Transverse colon (tissue), 4 donors: ENCODE measurements at regions of chr10 and their contacts with region 1.

Region 1: GRCh38 chr10:119028900-119029612 is 458 bp upstream of the NANOS1 start:
- DNase-seq: peak; percentile 89
- H3K4me3 ChIP-seq: peak overlapping the region; percentile 19 to 74 (median 62)
- H3K27ac ChIP-seq: peak overlapping the region; percentile 70 to 84 (median 76)
- H3K4me1 ChIP-seq: peaks cover 5 to 30% (median 21%) of the 10 kb centered on the region in 4 donors
- H3K27me3 ChIP-seq: no peaks in the 10 kb centered on the region
- CTCF ChIP-seq: peak in 1 of 5 experiments; percentile 24
- EP300 ChIP-seq: no peak
- POLR2A ChIP-seq: no peak

Region 2: DNA sequence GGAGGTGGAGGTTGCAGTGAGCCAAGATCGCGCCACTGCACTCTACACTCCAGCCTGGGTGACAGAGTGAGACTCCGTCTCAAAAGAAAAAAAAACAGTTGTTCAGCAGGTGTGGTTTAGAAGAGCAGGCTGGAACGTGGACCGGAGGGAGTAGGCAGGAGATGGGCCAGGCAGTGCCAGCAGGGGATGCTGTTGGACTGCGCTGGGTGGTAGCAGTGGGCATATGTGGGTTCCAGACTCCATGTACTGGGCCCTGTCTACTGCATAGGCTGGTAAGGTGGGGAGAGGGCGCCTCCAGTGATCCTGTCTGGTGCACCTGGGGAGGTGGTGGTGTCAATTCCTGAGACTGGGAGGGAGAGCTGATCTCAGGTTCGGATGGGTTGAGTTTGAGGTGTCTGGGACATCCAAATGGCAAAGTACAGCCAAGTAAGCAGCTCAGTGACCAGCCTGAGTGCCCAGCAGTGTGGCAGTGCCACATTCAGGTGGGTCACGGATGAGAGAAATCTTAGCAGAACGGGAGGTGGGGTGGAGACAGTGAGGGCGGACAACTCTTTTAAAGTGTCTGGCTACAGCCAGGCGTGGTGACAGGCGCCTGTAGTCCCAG is 110.5 kb after region 1 on chr10:
- in situ Hi-C with region 1: loop called in 1 of 4 experiments (anchors 25 kb)
- intact Hi-C with region 1: no loop called
- DNase-seq: no peak
- H3K4me3 ChIP-seq: no peak overlapping the region
- H3K27ac ChIP-seq: no peak overlapping the region
- H3K4me1 ChIP-seq: no peaks in the 10 kb centered on the region
- H3K27me3 ChIP-seq: no peaks in the 10 kb centered on the region
- CTCF ChIP-seq: peak; percentile 16 to 33 (median 23)
- EP300 ChIP-seq: no peak
- POLR2A ChIP-seq: no peak

Region 3: GRCh38 chr10:119222537-119222936 is 193.5 kb after region 1 on chr10:
- in situ Hi-C with region 1: no loop called
- intact Hi-C with region 1: no loop called
- DNase-seq: no peak
- H3K4me3 ChIP-seq: no peak overlapping the region
- H3K27ac ChIP-seq: peak overlapping the region; percentile 76 to 81 (median 78)
- H3K4me1 ChIP-seq: peaks cover 14 to 34% (median 22%) of the 10 kb centered on the region in 4 donors
- H3K27me3 ChIP-seq: no peaks in the 10 kb centered on the region
- CTCF ChIP-seq: no peak
- EP300 ChIP-seq: no peak
- POLR2A ChIP-seq: no peak